Spleen (tissue), 13 donors: ENCODE measurements at regions of chr15 and their contacts with region 1.

Region 1: GRCh38 chr15:97909291-97909891 is 51.1 kb upstream of the ARRDC4 start:
- DNase-seq: peak; percentile 84
- H3K4me3 ChIP-seq: no peak overlapping the region
- H3K27ac ChIP-seq: no peak overlapping the region
- H3K4me1 ChIP-seq: peaks cover 0 to under 1% (median 0%) of the 10 kb centered on the region in 6 donors
- H3K27me3 ChIP-seq: peaks cover 0 to 18% (median 0%) of the 10 kb centered on the region in 7 donors
- CTCF ChIP-seq: peak; percentile 68 to 91 (median 79)
- POLR2A ChIP-seq: no peak

Region 2: GRCh38 chr15:98085003-98085639 is 175.7 kb after region 1 on chr15:
- intact Hi-C with region 1: loop called (anchors 2 kb)
- DNase-seq: no peak
- H3K4me3 ChIP-seq: no peak overlapping the region
- H3K27ac ChIP-seq: no peak overlapping the region
- H3K4me1 ChIP-seq: no peaks in the 10 kb centered on the region
- H3K27me3 ChIP-seq: no peaks in the 10 kb centered on the region
- CTCF ChIP-seq: peak; percentile 31 to 82 (median 62)
- POLR2A ChIP-seq: no peak

Region 3: GRCh38 chr15:98177924-98178592 is 268.7 kb after region 1 on chr15:
- intact Hi-C with region 1: loop called (anchors 5 kb)
- DNase-seq: no peak
- H3K4me3 ChIP-seq: no peak overlapping the region
- H3K27ac ChIP-seq: no peak overlapping the region
- H3K4me1 ChIP-seq: peaks cover 0 to 7% (median 0%) of the 10 kb centered on the region in 6 donors
- H3K27me3 ChIP-seq: peaks cover 0 to 38% (median 6%) of the 10 kb centered on the region in 7 donors
- CTCF ChIP-seq: peak; percentile 35 to 67 (median 55)
- POLR2A ChIP-seq: no peak

Region 4: DNA sequence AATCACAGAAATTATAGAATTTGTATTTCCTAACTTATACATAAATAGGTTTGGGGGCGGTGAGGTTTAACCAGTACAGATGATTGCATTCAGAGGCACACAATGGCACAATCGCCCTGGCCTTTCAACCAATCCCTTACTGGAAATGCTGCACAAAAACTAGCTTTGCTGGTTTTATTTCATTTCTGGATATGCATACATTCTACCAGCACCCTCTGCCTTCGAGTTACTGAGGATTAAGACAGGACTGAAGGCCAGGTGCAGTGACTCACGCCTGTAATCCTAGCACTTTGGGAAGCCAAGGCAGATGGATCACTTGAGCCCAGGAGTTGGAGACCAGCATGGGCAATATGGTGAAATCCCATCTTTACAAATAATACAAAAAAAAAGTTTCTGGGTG is 387.3 kb after region 1 on chr15:
- intact Hi-C with region 1: loop called (anchors 5 kb)
- DNase-seq: no peak
- H3K4me3 ChIP-seq: no peak overlapping the region
- H3K27ac ChIP-seq: no peak overlapping the region
- H3K4me1 ChIP-seq: peaks cover 0 to 11% (median 7%) of the 10 kb centered on the region in 6 donors
- H3K27me3 ChIP-seq: peaks cover 0 to 51% (median 12%) of the 10 kb centered on the region in 7 donors
- CTCF ChIP-seq: no peak
- POLR2A ChIP-seq: no peak